ENCODE measurements at regions of chr17 and their contacts with region 1.

Region 1: GRCh38 chr17:78360371-78361224 is 721 bp upstream of the SOCS3 start:
- DNase-seq: peak; percentile 98
- H3K4me3 ChIP-seq: peak overlapping the region; percentile 92 to 98 (median 95)
- H3K27ac ChIP-seq: peak overlapping the region; percentile 95 to 99 (median 98)
- H3K4me1 ChIP-seq: peaks cover 45 to 61% (median 49%) of the 10 kb centered on the region in 4 donors
- H3K27me3 ChIP-seq: no peaks in the 10 kb centered on the region
- CTCF ChIP-seq: peak; percentile 86 to 98 (median 87)
- EP300 ChIP-seq: no peak
- POLR2A ChIP-seq: no peak

Region 2: GRCh38 chr17:78174346-78174869 is 186.2 kb before region 1 on chr17:
- intact Hi-C with region 1: loop called (anchors 5 kb)
- DNase-seq: peak; percentile 95
- H3K4me3 ChIP-seq: no peak overlapping the region
- H3K27ac ChIP-seq: peak overlapping the region; percentile 83 to 98 (median 90)
- H3K4me1 ChIP-seq: peaks cover 74 to 100% (median 99%) of the 10 kb centered on the region in 4 donors
- H3K27me3 ChIP-seq: no peaks in the 10 kb centered on the region
- CTCF ChIP-seq: peak; percentile 52 to 77 (median 76)
- EP300 ChIP-seq: no peak
- POLR2A ChIP-seq: no peak

Region 3: GRCh38 chr17:78289802-78290363 is 70.7 kb before region 1 on chr17:
- intact Hi-C with region 1: loop called (anchors 1 kb)
- DNase-seq: peak; percentile 95
- H3K4me3 ChIP-seq: no peak overlapping the region
- H3K27ac ChIP-seq: no peak overlapping the region
- H3K4me1 ChIP-seq: peaks cover 6 to 15% (median 9%) of the 10 kb centered on the region in 4 donors
- H3K27me3 ChIP-seq: no peaks in the 10 kb centered on the region
- CTCF ChIP-seq: peak; percentile 69 to 84 (median 74)
- EP300 ChIP-seq: no peak
- POLR2A ChIP-seq: no peak

Region 4: GRCh38 chr17:78421484-78422266 is 61.1 kb after region 1 on chr17:
- intact Hi-C with region 1: loop called (anchors 1 kb)
- DNase-seq: no peak
- H3K4me3 ChIP-seq: no peak overlapping the region
- H3K27ac ChIP-seq: peak overlapping the region in 1 of 4 donors; percentile 17
- H3K4me1 ChIP-seq: peaks cover 19 to 53% (median 35%) of the 10 kb centered on the region in 4 donors
- H3K27me3 ChIP-seq: no peaks in the 10 kb centered on the region
- CTCF ChIP-seq: peak in 2 of 3 experiments; percentile 98
- EP300 ChIP-seq: no peak
- POLR2A ChIP-seq: no peak

Measured in esophagus muscularis mucosa (tissue), 4 donors.